Activated CD4-positive, alpha-beta T cell treated with anti-CD3 and anti-CD28 coated beads, Interleukin-2, amount 10 ng/mL, durations not matched to agents 24 days and 14 days (primary cell): ENCODE measurements at regions of chr2 and their contacts with region 1.

Region 1: DNA sequence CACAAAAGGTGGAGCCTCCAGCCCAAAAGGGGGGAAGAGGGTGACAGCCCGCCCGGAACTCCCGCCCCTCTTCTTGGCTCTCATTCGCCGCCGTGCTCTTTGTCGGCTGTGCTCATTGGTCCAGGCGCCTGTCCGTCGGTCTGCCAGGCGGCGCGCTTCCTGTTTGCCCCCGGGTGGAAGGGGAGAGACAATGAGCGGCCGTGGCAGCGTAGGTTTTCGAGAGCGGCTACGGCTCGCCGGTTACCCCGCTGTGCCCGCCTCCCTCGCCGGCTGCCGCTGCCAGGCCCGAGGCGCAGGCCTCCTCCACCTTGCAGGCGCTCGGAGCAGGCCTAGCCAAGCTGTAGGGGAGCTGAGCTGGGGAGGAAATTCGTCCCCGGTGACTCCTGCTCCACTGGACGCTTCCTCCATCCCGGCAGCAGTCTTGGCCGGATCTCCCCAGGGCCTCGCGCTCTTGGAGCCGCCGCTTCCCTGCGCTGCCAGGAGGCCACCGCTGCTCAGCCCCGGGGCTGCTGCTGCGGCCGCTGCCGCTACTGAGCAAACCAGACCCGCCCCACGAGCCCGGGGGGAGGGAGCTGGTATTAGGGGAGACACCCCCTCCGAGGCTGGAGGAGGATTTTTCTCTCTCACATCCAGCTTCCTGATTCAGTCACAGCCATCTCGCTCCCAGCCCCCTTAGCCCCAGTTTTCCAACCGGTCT is at the start of gene SP3:
- DNase-seq: peak; percentile 98
- H3K4me3 Mint-ChIP-seq: peak within 1 kb of the TSS; percentile 90
- H3K27ac Mint-ChIP-seq: peak within 1 kb of the TSS; percentile 100
- H3K4me1 Mint-ChIP-seq: peaks cover 24% of the 10 kb centered on the region
- H3K27me3 Mint-ChIP-seq: no peaks in the 10 kb centered on the region
- total RNA-seq, gene SP3: 99.9 and 104 TPM in 2 replicates

Region 2: DNA sequence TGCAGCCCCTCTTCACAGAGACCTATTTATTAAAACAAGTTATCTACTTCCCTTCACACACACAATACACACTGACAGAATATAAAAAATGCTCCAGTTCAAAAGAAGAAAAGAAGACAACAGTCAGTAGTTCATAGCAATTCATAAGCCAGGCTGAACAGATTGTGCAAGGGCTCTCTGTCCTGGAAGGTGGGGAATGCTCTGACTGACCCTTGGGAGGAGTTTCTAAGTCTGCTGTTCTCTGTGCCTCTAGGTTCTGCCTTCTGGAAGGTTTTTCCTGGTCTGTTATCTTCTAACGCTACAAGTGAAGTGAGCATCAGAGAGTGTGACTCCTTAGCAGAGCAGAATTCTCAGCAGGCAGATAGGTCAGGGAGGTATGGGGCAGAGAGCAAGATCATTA is 36.0 kb before region 1 on chr2:
- intact Hi-C with region 1: loop called (anchors 5 kb)
- DNase-seq: no peak
- H3K4me3 Mint-ChIP-seq: no peak overlapping the region
- H3K27ac Mint-ChIP-seq: peak overlapping the region; percentile 3
- H3K4me1 Mint-ChIP-seq: peaks cover 14% of the 10 kb centered on the region
- H3K27me3 Mint-ChIP-seq: no peaks in the 10 kb centered on the region

Region 3: DNA sequence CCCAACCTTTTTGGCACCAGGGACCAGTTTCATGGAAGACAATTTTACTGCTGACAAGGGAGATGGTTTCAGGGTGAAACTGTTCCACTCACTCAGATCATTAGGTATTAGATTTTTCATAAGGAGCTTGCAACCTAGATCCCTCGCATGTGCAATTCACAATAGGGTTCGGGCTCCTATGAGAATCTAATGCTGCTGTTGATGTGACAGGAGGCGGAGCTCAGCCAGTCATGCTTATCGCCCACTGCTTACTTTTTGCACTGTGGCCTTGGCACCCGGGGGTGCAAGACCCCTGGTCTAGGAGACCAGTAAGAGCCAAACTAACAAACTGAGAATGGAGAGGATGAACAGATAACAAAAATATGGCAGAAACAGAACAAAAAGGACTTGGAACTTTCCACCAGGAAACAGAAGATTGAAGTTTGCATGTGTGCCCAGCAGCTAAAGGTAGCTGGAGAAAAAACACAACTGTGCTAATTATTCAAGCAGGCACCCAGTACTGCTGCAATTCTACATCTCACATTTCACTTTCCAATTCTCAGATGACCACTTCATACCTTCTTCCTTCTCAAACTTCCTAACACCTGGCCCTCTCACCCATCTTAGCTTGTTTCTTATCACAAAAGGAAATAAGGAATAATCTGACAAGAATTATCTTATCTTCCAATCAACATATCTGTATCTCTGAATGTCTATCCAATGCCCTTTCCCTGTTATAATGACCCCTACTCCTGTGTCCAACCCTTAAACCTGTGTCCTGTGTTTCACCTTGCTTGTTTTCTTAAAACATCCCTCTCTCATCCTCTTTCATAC is 25.1 kb before region 1 on chr2:
- intact Hi-C with region 1: loop called (anchors 2 kb)
- DNase-seq: no peak
- H3K4me3 Mint-ChIP-seq: peak overlapping the region; percentile 6
- H3K27ac Mint-ChIP-seq: peak overlapping the region; percentile 76
- H3K4me1 Mint-ChIP-seq: peaks cover 51% of the 10 kb centered on the region
- H3K27me3 Mint-ChIP-seq: no peaks in the 10 kb centered on the region

Region 4: GRCh38 chr2:173952267-173953046 is 13.0 kb before region 1 on chr2:
- intact Hi-C with region 1: no loop called
- DNase-seq: no peak
- H3K4me3 Mint-ChIP-seq: no peak overlapping the region
- H3K27ac Mint-ChIP-seq: no peak overlapping the region
- H3K4me1 Mint-ChIP-seq: peaks cover 54% of the 10 kb centered on the region
- H3K27me3 Mint-ChIP-seq: no peaks in the 10 kb centered on the region

Region 5: DNA sequence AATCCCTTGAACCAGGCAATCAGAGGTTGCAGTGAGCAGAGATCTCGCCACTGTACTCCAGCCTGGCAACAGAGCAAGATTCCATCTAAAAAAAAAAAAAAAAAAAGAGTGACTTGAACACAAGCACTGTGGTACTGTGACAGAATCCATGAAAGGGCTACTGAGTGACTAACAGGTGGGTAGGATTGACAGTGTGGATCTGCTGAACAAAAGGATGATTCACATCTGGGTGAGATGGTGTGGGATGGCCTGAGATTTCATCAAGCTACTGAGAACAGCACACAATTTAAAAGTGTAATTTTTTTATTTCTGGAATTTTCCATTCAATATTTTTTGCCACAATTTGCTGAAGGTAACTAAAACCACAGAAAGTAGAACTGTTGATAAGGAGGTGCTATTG is 13.0 kb after region 1 on chr2:
- intact Hi-C with region 1: loop called (anchors 1 kb)
- DNase-seq: no peak
- H3K4me3 Mint-ChIP-seq: no peak overlapping the region
- H3K27ac Mint-ChIP-seq: peak overlapping the region; percentile 35
- H3K4me1 Mint-ChIP-seq: peaks cover 23% of the 10 kb centered on the region
- H3K27me3 Mint-ChIP-seq: no peaks in the 10 kb centered on the region

Region 6: DNA sequence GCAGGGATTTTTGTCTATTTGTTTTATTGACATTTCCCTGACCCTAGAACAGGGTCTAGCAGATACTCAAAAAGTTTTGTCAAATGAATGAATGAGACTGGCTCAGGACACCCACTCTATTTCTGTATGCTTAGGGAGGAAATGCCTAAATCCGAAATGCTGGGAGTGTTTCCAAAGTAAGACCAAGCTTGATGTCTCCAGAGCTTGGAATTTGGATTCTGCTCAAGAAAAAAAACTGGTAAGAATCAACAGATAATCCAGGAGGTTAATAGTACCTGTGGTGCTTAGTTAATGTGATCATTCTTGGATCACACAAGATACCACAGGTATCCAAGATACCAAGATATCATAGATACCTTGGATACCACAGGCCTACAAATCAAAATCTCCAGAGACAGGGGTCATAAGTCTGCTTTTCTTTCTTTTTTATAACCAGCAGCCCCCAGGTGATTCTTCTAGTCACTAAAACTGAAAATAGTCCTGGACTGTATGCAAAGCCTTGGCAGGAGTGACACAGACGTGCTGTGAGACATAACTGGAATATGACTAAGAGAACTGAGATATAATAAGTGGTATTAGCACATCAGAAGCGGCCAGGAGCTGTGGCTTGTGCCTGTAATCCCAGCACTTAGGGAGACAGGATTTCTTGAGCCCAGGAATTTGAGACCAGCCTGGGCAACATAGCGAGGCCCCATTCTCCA is 39.6 kb after region 1 on chr2:
- intact Hi-C with region 1: loop called (anchors 1 kb)
- DNase-seq: no peak
- H3K4me3 Mint-ChIP-seq: no peak overlapping the region
- H3K27ac Mint-ChIP-seq: no peak overlapping the region
- H3K4me1 Mint-ChIP-seq: peaks cover 3% of the 10 kb centered on the region
- H3K27me3 Mint-ChIP-seq: peaks cover 10% of the 10 kb centered on the region

Region 7: DNA sequence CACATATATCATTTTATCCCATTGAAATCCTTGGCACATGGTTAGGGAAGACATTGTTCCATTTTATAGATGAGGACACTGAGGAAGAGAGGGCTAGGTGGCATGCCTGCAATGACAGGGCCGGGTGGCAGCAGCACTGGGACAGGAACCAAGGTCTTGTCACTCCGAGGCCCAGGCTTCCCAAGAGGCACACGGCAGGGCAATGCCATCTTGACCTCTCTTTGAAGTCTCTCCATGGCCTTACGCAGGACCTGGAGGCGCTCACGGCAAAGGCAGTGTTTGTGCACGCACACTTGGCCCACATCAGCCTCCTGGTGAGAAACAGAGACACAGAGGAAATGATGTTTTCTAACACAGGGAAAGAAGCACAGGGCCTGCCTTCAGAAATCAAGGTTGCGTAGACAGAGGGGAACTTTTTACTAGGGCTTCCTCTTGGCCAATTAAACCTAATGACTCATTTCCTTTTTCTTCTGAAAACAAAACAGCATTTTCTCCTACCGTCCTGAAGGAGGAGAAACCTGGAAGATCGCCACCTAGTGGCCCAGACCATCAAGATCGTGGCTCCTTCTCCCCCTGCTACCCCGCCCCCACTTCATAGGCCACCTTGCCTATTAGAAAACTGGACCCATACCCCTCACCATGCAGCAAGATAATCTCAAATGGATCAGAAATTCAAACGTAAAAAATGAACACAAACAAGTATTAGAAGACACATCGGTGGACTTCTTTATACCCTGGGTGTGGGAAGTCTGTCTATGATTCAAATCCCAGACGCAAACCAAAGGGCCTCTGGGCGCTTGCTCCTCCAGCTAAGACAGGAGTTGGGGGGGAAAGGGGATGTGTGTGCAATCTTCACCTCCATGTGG is 74.3 kb after region 1 on chr2:
- intact Hi-C with region 1: loop called (anchors 1 kb)
- DNase-seq: peak; percentile 94
- H3K4me3 Mint-ChIP-seq: peak overlapping the region; percentile 62
- H3K27ac Mint-ChIP-seq: peak overlapping the region; percentile 95
- H3K4me1 Mint-ChIP-seq: peaks cover 13% of the 10 kb centered on the region
- H3K27me3 Mint-ChIP-seq: no peaks in the 10 kb centered on the region